CD4-positive, alpha-beta T cell (primary cell): ENCODE measurements at regions of chr17 and their contacts with region 1.

Region 1: GRCh38 chr17:40317880-40318829 is 9.2 kb downstream of the RARA start:
- DNase-seq: peak; percentile 81 to 95 (median 90)
- ATAC-seq: peak; percentile 61
- H3K4me3 ChIP-seq: peak overlapping the region; percentile 96
- H3K4me3 Mint-ChIP-seq: peak overlapping the region; percentile 95
- H3K27ac ChIP-seq: peak overlapping the region; percentile 99
- H3K27ac Mint-ChIP-seq: peak overlapping the region; percentile 99
- H3K4me1 ChIP-seq: peaks cover 85% of the 10 kb centered on the region
- H3K4me1 Mint-ChIP-seq: peaks cover 84% of the 10 kb centered on the region
- H3K27me3 ChIP-seq: no peaks in the 10 kb centered on the region
- H3K27me3 Mint-ChIP-seq: no peaks in the 10 kb centered on the region
- CTCF ChIP-seq: no peak

Region 2: DNA sequence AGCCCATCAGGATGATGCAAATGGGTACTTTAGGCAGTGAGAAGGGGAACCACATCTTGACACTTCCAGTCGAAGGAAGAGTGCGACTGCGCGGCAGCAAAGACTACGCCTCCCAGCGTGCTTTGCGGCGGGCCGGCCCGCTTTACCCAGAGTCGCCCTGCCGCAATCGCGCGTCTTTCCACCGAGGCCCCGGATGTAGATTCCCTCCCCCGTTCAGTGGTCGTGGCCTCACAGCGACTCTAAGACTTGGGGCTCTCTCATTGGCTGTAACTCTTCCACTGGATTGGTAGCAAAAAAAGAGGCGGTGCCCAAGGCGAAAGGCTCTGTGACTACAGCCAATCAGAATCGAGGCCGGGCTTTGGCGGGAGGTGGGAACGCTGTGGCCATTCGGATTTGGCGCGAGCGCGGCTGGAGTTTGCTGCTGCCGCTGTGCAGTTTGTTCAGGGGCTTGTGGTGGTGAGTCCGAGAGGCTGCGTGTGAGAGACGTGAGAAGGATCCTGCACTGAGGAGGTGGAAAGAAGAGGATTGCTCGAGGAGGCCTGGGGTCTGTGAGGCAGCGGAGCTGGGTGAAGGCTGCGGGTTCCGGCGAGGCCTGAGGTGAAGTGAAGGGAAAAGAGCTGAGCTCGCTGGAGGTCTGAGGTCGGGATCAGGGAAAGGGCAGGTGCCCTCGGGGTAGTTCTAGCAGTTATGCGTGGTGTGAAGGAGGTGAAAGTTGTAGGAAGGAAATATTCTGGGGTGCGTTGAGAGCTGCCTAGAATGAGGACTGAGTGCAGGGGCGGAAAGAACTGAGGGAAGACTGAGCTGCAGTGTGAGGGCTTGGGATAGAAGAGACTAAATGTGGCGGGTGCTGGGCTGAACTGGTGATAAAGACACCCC is 30.4 kb before region 1 on chr17 and contains the start of gene CDC6:
- CTCF ChIA-PET with region 1: interaction called, 4 read pairs
- POLR2A ChIA-PET with region 1: interaction called, 3 read pairs
- intact Hi-C with region 1: loop called (anchors 1 kb)
- DNase-seq: peak; percentile 94 to 100 (median 97)
- ATAC-seq: peak; percentile 92
- H3K4me3 ChIP-seq: peak within 1 kb of the TSS; percentile 88
- H3K4me3 Mint-ChIP-seq: peak within 1 kb of the TSS; percentile 95
- H3K27ac ChIP-seq: no peak within 1 kb of the TSS
- H3K27ac Mint-ChIP-seq: peak within 1 kb of the TSS; percentile 60
- H3K4me1 ChIP-seq: peaks cover 24% of the 10 kb centered on the region
- H3K4me1 Mint-ChIP-seq: peaks cover 32% of the 10 kb centered on the region
- H3K27me3 ChIP-seq: no peaks in the 10 kb centered on the region
- H3K27me3 Mint-ChIP-seq: no peaks in the 10 kb centered on the region
- CTCF ChIP-seq: no peak
- total RNA-seq, gene CDC6: 1.0 to 1.8 TPM

Region 3: GRCh38 chr17:40331743-40332641 is 13.8 kb after region 1 on chr17:
- CTCF ChIA-PET with region 1: interaction called, 30 read pairs
- POLR2A ChIA-PET with region 1: interaction called, 18 read pairs
- intact Hi-C with region 1: no loop called
- DNase-seq: peak in 1 of 14 experiments; percentile 32
- ATAC-seq: no peak
- H3K4me3 ChIP-seq: no peak overlapping the region
- H3K4me3 Mint-ChIP-seq: peak overlapping the region; percentile 51
- H3K27ac ChIP-seq: peak overlapping the region in 1 of 2 donors; percentile 15
- H3K27ac Mint-ChIP-seq: peak overlapping the region; percentile 93
- H3K4me1 ChIP-seq: peaks cover 88% of the 10 kb centered on the region
- H3K4me1 Mint-ChIP-seq: peaks cover 79% of the 10 kb centered on the region
- H3K27me3 ChIP-seq: no peaks in the 10 kb centered on the region
- H3K27me3 Mint-ChIP-seq: no peaks in the 10 kb centered on the region
- CTCF ChIP-seq: no peak

Region 4: GRCh38 chr17:40355123-40355803 is 37.1 kb after region 1 on chr17:
- CTCF ChIA-PET with region 1: interaction called, 25 read pairs
- POLR2A ChIA-PET with region 1: interaction called, 19 read pairs
- intact Hi-C with region 1: no loop called
- DNase-seq: peak; percentile 65 to 86 (median 78)
- ATAC-seq: peak; percentile 76
- H3K4me3 ChIP-seq: no peak overlapping the region
- H3K4me3 Mint-ChIP-seq: no peak overlapping the region
- H3K27ac ChIP-seq: no peak overlapping the region
- H3K27ac Mint-ChIP-seq: peak overlapping the region; percentile 36
- H3K4me1 ChIP-seq: peaks cover 15% of the 10 kb centered on the region
- H3K4me1 Mint-ChIP-seq: peaks cover 17% of the 10 kb centered on the region
- H3K27me3 ChIP-seq: peaks cover 0 to 3% of the 10 kb centered on the region in 2 experiments
- H3K27me3 Mint-ChIP-seq: peaks cover 3% of the 10 kb centered on the region
- CTCF ChIP-seq: peak; percentile 95

Region 5: GRCh38 chr17:40608061-40608588 is 290.0 kb after region 1 on chr17:
- CTCF ChIA-PET with region 1: no interaction called
- POLR2A ChIA-PET with region 1: interaction called, 3 read pairs
- intact Hi-C with region 1: loop called (anchors 5 kb)
- DNase-seq: peak in 7 of 14 experiments; percentile 37 to 92 (median 52)
- ATAC-seq: peak; percentile 55
- H3K4me3 ChIP-seq: peak overlapping the region; percentile 17
- H3K4me3 Mint-ChIP-seq: peak overlapping the region; percentile 73
- H3K27ac ChIP-seq: peak overlapping the region; percentile 97 to 99
- H3K27ac Mint-ChIP-seq: peak overlapping the region; percentile 98
- H3K4me1 ChIP-seq: peaks cover 97% of the 10 kb centered on the region
- H3K4me1 Mint-ChIP-seq: peaks cover 95% of the 10 kb centered on the region
- H3K27me3 ChIP-seq: no peaks in the 10 kb centered on the region
- H3K27me3 Mint-ChIP-seq: no peaks in the 10 kb centered on the region
- CTCF ChIP-seq: no peak